ENCODE measurements at regions of chr11 and their contacts with region 1.

Region 1: GRCh38 chr11:118859973-118860372 is 23.7 kb upstream of the CXCR5 start:
- DNase-seq: no peak
- ATAC-seq: no peak
- H3K4me3 ChIP-seq: no peak overlapping the region
- H3K27ac ChIP-seq: no peak overlapping the region
- H3K4me1 ChIP-seq: no peaks in the 10 kb centered on the region
- H3K27me3 ChIP-seq: no peaks in the 10 kb centered on the region
- CTCF ChIP-seq: no peak

Region 2: GRCh38 chr11:118791111-118791965 is 68.6 kb before region 1 on chr11 and contains the start of gene DDX6:
- intact Hi-C with region 1: loop called in 1 of 2 experiments (anchors 10 kb)
- DNase-seq: peak; percentile 92 to 96
- ATAC-seq: peak; percentile 87 to 91 (median 89)
- H3K4me3 ChIP-seq: peak within 1 kb of the TSS; percentile 89
- H3K27ac ChIP-seq: peak within 1 kb of the TSS; percentile 97
- H3K4me1 ChIP-seq: peaks cover 23% of the 10 kb centered on the region
- H3K27me3 ChIP-seq: no peaks in the 10 kb centered on the region
- CTCF ChIP-seq: peak; percentile 39
- total RNA-seq, gene DDX6: 77.6 to 90.9 (median 79.0) TPM

Region 3: DNA sequence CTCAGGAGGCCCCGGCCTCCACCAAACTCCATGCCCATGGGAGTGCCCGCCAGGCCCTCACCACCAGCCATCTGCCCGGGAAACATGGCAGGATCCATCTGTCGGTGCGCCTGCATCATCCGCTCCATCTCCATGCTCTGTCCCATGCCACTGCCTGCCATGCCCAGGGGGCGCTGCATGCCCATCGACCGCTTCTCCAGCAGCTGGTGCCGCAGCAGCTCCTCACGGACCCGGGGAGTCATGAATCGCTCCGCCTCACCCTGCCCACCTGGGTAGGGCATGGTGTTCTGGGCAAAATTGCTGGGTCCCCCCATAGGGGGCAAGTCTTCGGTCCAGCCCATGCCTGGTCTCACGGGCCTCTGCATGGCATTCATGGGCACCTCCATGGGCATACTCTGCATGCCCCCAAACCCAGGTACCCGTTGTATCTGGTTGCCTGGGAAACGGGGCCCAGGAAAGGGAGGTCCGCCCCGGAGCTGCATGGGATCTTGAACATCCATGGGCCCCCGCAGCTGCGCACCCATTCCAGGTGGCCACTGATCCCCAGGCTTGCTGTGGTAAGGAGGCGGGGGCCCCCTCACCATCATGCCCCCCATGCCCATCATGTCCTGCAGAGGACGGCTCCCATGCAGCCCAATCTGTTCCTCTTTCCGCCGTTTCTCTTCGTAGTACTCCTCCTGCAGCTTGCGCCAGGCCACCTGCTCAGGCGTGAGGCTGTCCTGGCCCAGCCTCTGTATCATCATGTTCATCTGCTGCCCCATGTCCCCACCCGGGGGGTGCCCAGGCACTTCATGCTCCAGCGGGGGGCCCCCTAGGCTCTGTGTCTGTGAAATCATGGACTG is 41.7 kb after region 1 on chr11:
- intact Hi-C with region 1: no loop called
- DNase-seq: peak in 1 of 2 donors; percentile 62
- ATAC-seq: peak in 3 of 4 donors; percentile 6 to 23 (median 17)
- H3K4me3 ChIP-seq: no peak overlapping the region
- H3K27ac ChIP-seq: no peak overlapping the region
- H3K4me1 ChIP-seq: peaks cover 4% of the 10 kb centered on the region
- H3K27me3 ChIP-seq: no peaks in the 10 kb centered on the region
- CTCF ChIP-seq: peak; percentile 7